ENCODE measurements at regions of chr11 and their contacts with region 1.

Region 1: DNA sequence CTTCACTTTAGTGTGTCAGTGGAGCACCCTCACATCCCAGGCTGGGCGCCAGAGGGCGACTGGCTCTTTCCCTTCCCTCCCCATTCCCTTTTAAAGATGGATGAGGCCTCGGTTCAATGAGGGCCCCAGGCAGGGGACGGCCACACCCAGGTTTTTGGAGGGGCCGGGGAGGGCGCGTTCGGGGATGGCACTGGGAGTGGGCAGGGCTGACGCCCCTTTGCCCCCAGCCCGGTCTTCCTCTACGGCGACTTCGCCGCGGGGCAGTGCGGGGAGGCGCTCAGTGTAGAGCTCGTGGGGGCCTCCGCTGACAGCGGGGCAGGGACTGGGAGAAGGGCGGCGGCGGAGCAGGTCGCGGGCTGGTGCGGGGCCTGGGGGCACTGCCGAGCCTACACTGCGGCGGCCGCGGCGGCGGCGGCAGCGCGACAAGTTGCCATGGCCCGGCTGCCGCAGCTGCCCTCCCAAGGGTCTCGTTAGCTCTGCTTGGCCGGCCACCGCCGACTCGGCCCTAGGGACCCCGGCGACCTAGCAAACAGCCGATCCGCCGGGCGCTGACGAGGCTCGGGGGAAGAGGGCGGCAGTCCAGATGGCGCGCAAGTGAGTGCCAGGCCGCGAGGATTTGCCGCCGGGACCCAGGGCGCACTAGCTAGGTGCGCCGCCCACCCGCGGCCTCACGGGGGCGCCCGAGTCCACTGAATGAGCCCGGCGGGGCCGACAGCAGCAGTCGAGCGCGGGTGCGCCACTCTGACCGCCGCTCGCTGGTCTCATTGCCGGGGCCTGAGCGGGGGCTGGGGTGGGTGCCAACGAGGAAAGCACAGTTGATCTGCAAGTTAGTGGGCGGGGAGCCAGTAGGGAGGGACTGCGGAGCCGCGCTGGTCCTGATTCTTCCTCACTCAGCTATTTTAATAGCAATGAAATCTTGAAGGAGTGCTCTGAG is 92.7 kb downstream of the RRM1 start:
- DNase-seq: peak; percentile 70
- ATAC-seq: peak; percentile 98
- H3K4me3 ChIP-seq: peak overlapping the region; percentile 50
- H3K27ac ChIP-seq: peak overlapping the region; percentile 24; the same call in 1 of the 2 replicates
- H3K4me1 ChIP-seq: no peaks in the 10 kb centered on the region; the same call in 1 of the 2 replicates
- H3K27me3 ChIP-seq: no peaks in the 10 kb centered on the region; the same call in 1 of the 2 replicates
- CTCF ChIP-seq: peak; percentile 97
- POLR2A ChIP-seq: peak; percentile 40; the same call in 1 of the 2 replicates
- RAD21 ChIP-seq: peak; percentile 91

Region 2: DNA sequence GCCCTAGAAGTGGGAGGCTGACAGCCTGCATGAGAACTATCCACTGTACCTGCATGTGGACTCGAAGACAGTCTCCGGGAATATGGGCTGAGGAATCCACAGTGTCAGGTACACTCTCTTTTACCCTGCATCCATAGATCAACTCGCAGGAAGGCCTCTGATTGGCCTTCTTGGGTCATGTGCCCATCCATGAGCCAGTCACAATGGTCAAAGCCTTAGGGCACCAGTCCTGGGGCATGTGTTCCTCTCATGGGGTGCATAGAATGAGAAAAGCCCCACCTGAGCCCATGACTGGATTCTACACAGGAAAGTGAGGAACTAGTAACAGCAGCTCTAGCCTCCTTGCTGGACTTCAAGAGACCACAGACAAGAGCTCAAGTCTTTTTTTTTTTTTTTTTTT is 531.8 kb before region 1 on chr11:
- CTCF ChIA-PET with region 1: no interaction called
- POLR2A ChIA-PET with region 1: no interaction called
- dilution Hi-C with region 1: no loop called
- in situ Hi-C with region 1: no loop called
- intact Hi-C with region 1: no loop called
- DNase-seq: no peak
- ATAC-seq: no peak
- H3K4me3 ChIP-seq: no peak overlapping the region
- H3K27ac ChIP-seq: no peak overlapping the region
- H3K4me1 ChIP-seq: no peaks in the 10 kb centered on the region
- H3K27me3 ChIP-seq: peaks cover 16% of the 10 kb centered on the region
- CTCF ChIP-seq: no peak
- POLR2A ChIP-seq: no peak
- RAD21 ChIP-seq: no peak

Region 3: GRCh38 chr11:3807909-3808860 is 379.1 kb before region 1 on chr11 and contains the start of gene PGAP2:
- CTCF ChIA-PET with region 1: no interaction called
- POLR2A ChIA-PET with region 1: no interaction called
- dilution Hi-C with region 1: no loop called
- in situ Hi-C with region 1: no loop called
- intact Hi-C with region 1: no loop called
- DNase-seq: peak; percentile 35
- ATAC-seq: peak; percentile 89
- H3K4me3 ChIP-seq: peak within 1 kb of the TSS; percentile 78
- H3K27ac ChIP-seq: peak within 1 kb of the TSS; percentile 39
- H3K4me1 ChIP-seq: no peaks in the 10 kb centered on the region
- H3K27me3 ChIP-seq: no peaks in the 10 kb centered on the region
- CTCF ChIP-seq: peak; percentile 69
- POLR2A ChIP-seq: no peak
- RAD21 ChIP-seq: peak; percentile 68
- total RNA-seq, gene PGAP2: 10.6 TPM in 2 replicates

Region 4: DNA sequence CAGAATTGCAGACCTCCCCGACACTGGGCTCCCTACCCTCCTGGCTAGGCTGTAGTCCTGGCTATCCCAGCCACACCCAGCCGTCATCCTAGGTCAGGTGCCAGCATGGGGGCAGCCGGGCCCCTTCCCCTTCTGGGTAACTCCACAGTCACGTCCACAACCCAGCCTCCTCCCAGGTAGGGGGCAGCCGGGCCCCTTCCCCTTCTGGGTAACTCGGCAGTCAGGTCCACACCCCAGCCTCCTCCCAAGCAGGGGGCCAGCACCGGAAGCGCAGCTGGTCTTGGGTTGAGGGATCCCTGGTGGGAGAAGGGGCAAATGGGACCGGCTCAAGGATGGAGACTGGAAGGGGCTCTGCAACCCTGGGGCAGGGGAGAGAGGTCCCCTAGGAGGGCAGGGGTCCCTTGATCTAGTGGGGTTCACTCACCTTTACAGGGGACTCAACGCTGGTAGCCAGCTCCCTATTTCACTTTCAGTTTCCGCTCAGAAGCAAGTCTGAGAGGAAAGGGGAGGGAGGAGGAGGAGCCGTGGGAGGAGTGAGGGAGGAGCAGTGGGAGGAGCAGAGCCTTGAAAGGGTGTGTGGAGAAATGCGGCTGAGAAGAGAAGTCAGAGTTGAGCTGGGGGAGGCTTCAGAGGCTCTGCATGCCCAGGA is 206.0 kb after region 1 on chr11 and contains the start of gene TRIM21:
- CTCF ChIA-PET with region 1: no interaction called
- POLR2A ChIA-PET with region 1: no interaction called
- dilution Hi-C with region 1: no loop called
- in situ Hi-C with region 1: no loop called
- intact Hi-C with region 1: loop called (anchors 5 kb)
- DNase-seq: peak; percentile 79
- ATAC-seq: peak; percentile 100
- H3K4me3 ChIP-seq: peak within 1 kb of the TSS; percentile 96
- H3K27ac ChIP-seq: peak within 1 kb of the TSS; percentile 85
- H3K4me1 ChIP-seq: no peaks in the 10 kb centered on the region
- H3K27me3 ChIP-seq: no peaks in the 10 kb centered on the region
- CTCF ChIP-seq: no peak
- POLR2A ChIP-seq: no peak
- RAD21 ChIP-seq: no peak
- total RNA-seq, gene TRIM21: 18.6 and 19.2 TPM in 2 replicates

Region 5: DNA sequence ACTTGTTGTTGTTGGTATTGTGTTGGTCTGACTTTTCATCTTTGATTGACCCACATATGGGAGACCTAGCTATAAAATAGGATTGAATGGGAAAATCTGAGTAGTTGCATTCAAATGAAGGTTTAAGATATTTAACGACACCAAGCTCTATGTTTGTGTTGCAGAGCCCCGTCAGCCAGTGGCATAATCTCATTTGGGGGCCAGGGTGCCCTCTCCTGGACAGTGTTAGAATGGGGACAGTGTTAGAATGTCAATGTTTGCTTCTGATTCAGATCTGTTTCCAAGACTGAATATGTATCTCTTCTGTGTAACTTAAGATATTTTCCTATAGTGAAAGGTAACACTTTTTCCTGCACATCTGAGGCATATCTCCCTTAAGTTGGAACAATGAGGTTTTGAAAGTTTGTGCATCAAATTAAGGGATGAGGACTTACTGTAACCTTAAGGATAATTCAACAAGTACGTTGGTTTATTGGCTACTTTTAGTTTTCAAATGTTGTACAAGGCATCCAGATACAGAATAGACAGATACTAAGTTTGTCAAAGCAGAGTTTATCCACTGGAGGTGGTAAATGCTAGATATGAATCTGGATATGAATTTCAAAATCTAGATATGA is 352.4 kb after region 1 on chr11:
- CTCF ChIA-PET with region 1: interaction called, 28 read pairs
- POLR2A ChIA-PET with region 1: no interaction called
- dilution Hi-C with region 1: no loop called
- in situ Hi-C with region 1: loop called (anchors 5 kb)
- intact Hi-C with region 1: loop called (anchors 1 kb)
- DNase-seq: peak; percentile 29
- ATAC-seq: peak; percentile 95
- H3K4me3 ChIP-seq: no peak overlapping the region
- H3K27ac ChIP-seq: no peak overlapping the region
- H3K4me1 ChIP-seq: no peaks in the 10 kb centered on the region
- H3K27me3 ChIP-seq: no peaks in the 10 kb centered on the region
- CTCF ChIP-seq: peak; percentile 68
- POLR2A ChIP-seq: no peak
- RAD21 ChIP-seq: peak; percentile 50; the same call in 1 of the 2 replicates

Region 6: GRCh38 chr11:4826425-4826824 is 639.1 kb after region 1 on chr11:
- CTCF ChIA-PET with region 1: no interaction called
- POLR2A ChIA-PET with region 1: no interaction called
- dilution Hi-C with region 1: no loop called
- in situ Hi-C with region 1: no loop called
- intact Hi-C with region 1: loop called (anchors 1 kb)
- DNase-seq: peak; percentile 44
- ATAC-seq: peak; percentile 54
- H3K4me3 ChIP-seq: no peak overlapping the region
- H3K27ac ChIP-seq: no peak overlapping the region
- H3K4me1 ChIP-seq: no peaks in the 10 kb centered on the region
- H3K27me3 ChIP-seq: no peaks in the 10 kb centered on the region; the same call in 1 of the 2 replicates
- CTCF ChIP-seq: peak; percentile 69
- POLR2A ChIP-seq: no peak
- RAD21 ChIP-seq: peak; percentile 81

Region 7: DNA sequence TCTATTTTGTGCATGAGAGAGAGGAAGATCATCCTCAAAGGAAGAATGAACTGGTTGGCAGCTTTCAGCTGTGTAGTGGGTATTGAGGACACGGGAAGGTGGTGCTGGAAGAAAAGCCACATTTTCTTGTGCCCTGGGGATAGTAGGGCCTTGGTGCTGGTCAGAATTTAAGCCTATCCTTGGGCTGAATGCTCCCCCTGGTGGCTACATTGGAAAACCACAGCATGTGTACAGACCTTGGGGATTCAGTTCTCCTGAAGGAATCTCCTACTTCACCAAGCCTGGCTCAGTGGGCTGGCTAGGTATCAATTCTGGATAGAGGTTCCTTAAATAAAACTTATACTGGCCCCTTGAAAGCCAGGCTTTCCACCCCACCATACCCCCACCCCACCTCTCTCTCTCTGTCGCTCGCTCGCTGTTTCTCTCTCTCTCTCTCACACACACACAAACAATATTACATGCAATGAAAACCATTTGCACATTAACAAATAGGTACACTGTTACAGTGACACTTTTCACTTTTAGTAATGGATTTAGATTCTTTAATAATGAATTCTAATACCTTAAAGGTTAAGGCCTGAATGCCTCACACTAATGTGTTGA is 1193.5 kb after region 1 on chr11:
- CTCF ChIA-PET with region 1: no interaction called
- POLR2A ChIA-PET with region 1: no interaction called
- dilution Hi-C with region 1: no loop called
- in situ Hi-C with region 1: no loop called
- intact Hi-C with region 1: loop called (anchors 5 kb)
- DNase-seq: peak; percentile 77
- ATAC-seq: peak; percentile 100
- H3K4me3 ChIP-seq: no peak overlapping the region
- H3K27ac ChIP-seq: no peak overlapping the region
- H3K4me1 ChIP-seq: no peaks in the 10 kb centered on the region
- H3K27me3 ChIP-seq: no peaks in the 10 kb centered on the region
- CTCF ChIP-seq: peak; percentile 89
- POLR2A ChIP-seq: 0 out of 2 replicates have a peak, but pooled peaks have one; percentile 34
- RAD21 ChIP-seq: peak; percentile 98